CD4-positive, alpha-beta memory T cell (primary cell): ENCODE measurements at regions of chr19 and their contacts with region 1.

Region 1: GRCh38 chr19:47745010-47745901 is at the start of gene NOP53:
- DNase-seq: peak; percentile 97 to 98 (median 97)
- H3K4me3 ChIP-seq: peak within 1 kb of the TSS; percentile 7 to 91
- H3K4me3 Mint-ChIP-seq: peak within 1 kb of the TSS; percentile 97 to 100 (median 99)
- H3K27ac ChIP-seq: peak within 1 kb of the TSS; percentile 98
- H3K27ac Mint-ChIP-seq: peak within 1 kb of the TSS; percentile 98 to 100 (median 100)
- H3K4me1 ChIP-seq: peaks cover 54% of the 10 kb centered on the region
- H3K4me1 Mint-ChIP-seq: peaks cover 18 to 49% (median 30%) of the 10 kb centered on the region in 4 donors
- H3K27me3 ChIP-seq: no peaks in the 10 kb centered on the region
- H3K27me3 Mint-ChIP-seq: peaks cover 0 to 3% of the 10 kb centered on the region in 2 donors
- total RNA-seq, gene NOP53: 863 to 875 TPM

Region 2: GRCh38 chr19:47436712-47437401 is 308.4 kb before region 1 on chr19:
- CTCF ChIA-PET with region 1: interaction called, 11 read pairs
- POLR2A ChIA-PET with region 1: no interaction called
- intact Hi-C with region 1: loop called (anchors 1 kb)
- DNase-seq: peak; percentile 71 to 82 (median 78)
- H3K4me3 ChIP-seq: no peak overlapping the region
- H3K4me3 Mint-ChIP-seq: peak overlapping the region in 4 of 8 donors; percentile 14 to 46 (median 34)
- H3K27ac ChIP-seq: no peak overlapping the region
- H3K27ac Mint-ChIP-seq: peak overlapping the region in 5 of 7 donors; percentile 19 to 80 (median 46)
- H3K4me1 ChIP-seq: peaks cover 13% of the 10 kb centered on the region
- H3K4me1 Mint-ChIP-seq: peaks cover 7 to 21% (median 17%) of the 10 kb centered on the region in 4 donors
- H3K27me3 ChIP-seq: peaks cover 6% of the 10 kb centered on the region
- H3K27me3 Mint-ChIP-seq: peaks cover 24 to 37% of the 10 kb centered on the region in 2 donors

Region 3: GRCh38 chr19:47514869-47515588 is 230.2 kb before region 1 on chr19 and contains the start of gene NAPA:
- CTCF ChIA-PET with region 1: interaction called, 3 read pairs
- POLR2A ChIA-PET with region 1: interaction called, 4 read pairs
- intact Hi-C with region 1: loop called (anchors 1 kb)
- DNase-seq: peak; percentile 100
- H3K4me3 ChIP-seq: peak within 1 kb of the TSS; percentile 95 to 98
- H3K4me3 Mint-ChIP-seq: peak within 1 kb of the TSS; percentile 97 to 99 (median 98)
- H3K27ac ChIP-seq: peak within 1 kb of the TSS; percentile 97
- H3K27ac Mint-ChIP-seq: peak within 1 kb of the TSS; percentile 97 to 99 (median 98)
- H3K4me1 ChIP-seq: peaks cover 64% of the 10 kb centered on the region
- H3K4me1 Mint-ChIP-seq: peaks cover 50 to 87% (median 66%) of the 10 kb centered on the region in 4 donors
- H3K27me3 ChIP-seq: no peaks in the 10 kb centered on the region
- H3K27me3 Mint-ChIP-seq: no peaks in the 10 kb centered on the region
- total RNA-seq, gene NAPA: 84.1 to 88.1 TPM

Region 4: GRCh38 chr19:47618771-47619170 is 126.5 kb before region 1 on chr19:
- CTCF ChIA-PET with region 1: no interaction called
- POLR2A ChIA-PET with region 1: no interaction called
- intact Hi-C with region 1: no loop called
- DNase-seq: no peak
- H3K4me3 ChIP-seq: no peak overlapping the region
- H3K4me3 Mint-ChIP-seq: no peak overlapping the region
- H3K27ac ChIP-seq: no peak overlapping the region
- H3K27ac Mint-ChIP-seq: no peak overlapping the region
- H3K4me1 ChIP-seq: peaks cover 32% of the 10 kb centered on the region
- H3K4me1 Mint-ChIP-seq: peaks cover 19 to 61% (median 35%) of the 10 kb centered on the region in 4 donors
- H3K27me3 ChIP-seq: no peaks in the 10 kb centered on the region
- H3K27me3 Mint-ChIP-seq: no peaks in the 10 kb centered on the region

Region 5: GRCh38 chr19:47634007-47634406 is 111.2 kb before region 1 on chr19:
- CTCF ChIA-PET with region 1: no interaction called
- POLR2A ChIA-PET with region 1: no interaction called
- intact Hi-C with region 1: no loop called
- DNase-seq: no peak
- H3K4me3 ChIP-seq: no peak overlapping the region
- H3K4me3 Mint-ChIP-seq: no peak overlapping the region
- H3K27ac ChIP-seq: no peak overlapping the region
- H3K27ac Mint-ChIP-seq: peak overlapping the region in 1 of 7 donors; percentile 70
- H3K4me1 ChIP-seq: no peaks in the 10 kb centered on the region
- H3K4me1 Mint-ChIP-seq: peaks cover 21 to 65% (median 25%) of the 10 kb centered on the region in 4 donors
- H3K27me3 ChIP-seq: no peaks in the 10 kb centered on the region
- H3K27me3 Mint-ChIP-seq: no peaks in the 10 kb centered on the region

Region 6: DNA sequence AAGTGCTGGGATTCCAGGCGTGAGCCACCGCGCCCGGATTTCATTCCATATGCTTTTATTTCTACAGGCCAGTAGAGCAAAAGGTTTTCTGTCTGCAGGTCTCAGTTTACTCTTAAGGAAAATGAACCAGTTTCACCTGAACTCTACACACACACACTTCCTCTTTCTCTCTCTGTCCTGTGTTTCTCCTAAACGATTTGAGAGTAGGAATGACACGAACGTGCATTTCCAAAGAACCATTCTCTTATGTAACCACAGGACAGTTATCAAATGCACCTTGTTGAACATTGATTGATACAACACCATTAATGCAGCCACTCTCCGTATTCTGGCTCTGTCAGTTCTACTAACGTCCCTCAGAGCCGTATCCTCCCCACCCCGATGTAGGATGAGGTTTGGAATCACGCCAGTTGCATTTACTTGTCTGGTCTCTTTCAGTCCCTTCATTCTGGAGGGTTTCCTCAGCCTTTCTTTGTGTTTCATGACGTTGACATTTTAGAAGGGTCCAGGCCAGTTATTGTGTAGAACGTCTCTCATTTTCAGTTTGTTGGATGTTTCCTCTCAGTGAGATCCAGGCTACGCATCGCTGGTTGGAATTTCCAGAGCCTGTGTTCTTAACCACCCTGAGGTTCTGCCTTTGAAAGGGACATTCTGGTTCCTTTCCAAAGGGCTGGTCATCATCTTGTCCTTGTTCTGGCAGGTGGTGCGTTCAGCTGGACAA is 100.3 kb before region 1 on chr19:
- CTCF ChIA-PET with region 1: no interaction called
- POLR2A ChIA-PET with region 1: no interaction called
- intact Hi-C with region 1: no loop called
- DNase-seq: no peak
- H3K4me3 ChIP-seq: no peak overlapping the region
- H3K4me3 Mint-ChIP-seq: no peak overlapping the region
- H3K27ac ChIP-seq: no peak overlapping the region
- H3K27ac Mint-ChIP-seq: peak overlapping the region in 1 of 7 donors; percentile 76
- H3K4me1 ChIP-seq: no peaks in the 10 kb centered on the region
- H3K4me1 Mint-ChIP-seq: peaks cover 27 to 54% (median 32%) of the 10 kb centered on the region in 4 donors
- H3K27me3 ChIP-seq: no peaks in the 10 kb centered on the region
- H3K27me3 Mint-ChIP-seq: no peaks in the 10 kb centered on the region

Region 7: DNA sequence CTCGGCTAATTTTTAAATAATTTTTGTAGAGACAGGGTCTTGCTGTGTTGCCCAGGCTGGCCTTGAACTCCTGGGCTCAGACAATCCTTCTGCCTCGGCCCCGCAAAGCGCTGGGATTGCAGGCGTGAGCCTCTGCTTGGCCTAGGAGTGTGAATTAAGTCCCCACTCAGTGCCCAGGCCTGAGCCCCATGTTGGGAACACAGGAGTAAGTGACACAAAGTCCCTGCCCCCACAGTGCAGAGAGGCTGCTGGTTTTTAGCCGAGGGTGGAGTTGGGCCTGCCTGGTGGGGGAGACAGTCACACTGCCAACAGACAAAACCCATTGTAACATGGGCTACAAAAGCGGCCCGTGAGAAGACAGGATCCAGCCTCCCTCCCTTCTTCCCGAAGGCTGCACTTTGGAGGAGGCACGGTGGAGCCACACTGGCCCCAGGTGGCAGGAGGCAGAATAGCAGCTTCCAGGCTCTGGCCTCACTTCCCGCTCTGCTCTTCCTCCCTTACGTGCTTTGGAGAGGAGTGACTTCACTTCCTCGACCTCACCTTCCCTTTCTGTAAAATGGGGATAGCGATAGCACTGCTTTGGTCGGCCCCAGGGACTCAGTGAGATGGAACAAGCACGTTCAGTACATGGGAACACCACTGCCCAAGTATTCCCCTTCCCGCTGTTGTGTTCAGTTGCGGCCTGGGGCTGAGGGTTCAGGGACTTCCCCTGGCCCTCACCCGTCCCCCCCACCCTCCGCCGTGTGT is 47.2 kb before region 1 on chr19:
- CTCF ChIA-PET with region 1: no interaction called
- POLR2A ChIA-PET with region 1: no interaction called
- intact Hi-C with region 1: loop called (anchors 1 kb)
- DNase-seq: peak; percentile 46 to 54 (median 51)
- H3K4me3 ChIP-seq: no peak overlapping the region
- H3K4me3 Mint-ChIP-seq: no peak overlapping the region
- H3K27ac ChIP-seq: no peak overlapping the region
- H3K27ac Mint-ChIP-seq: no peak overlapping the region
- H3K4me1 ChIP-seq: no peaks in the 10 kb centered on the region
- H3K4me1 Mint-ChIP-seq: peaks cover 0 to 4% (median 2%) of the 10 kb centered on the region in 4 donors
- H3K27me3 ChIP-seq: no peaks in the 10 kb centered on the region
- H3K27me3 Mint-ChIP-seq: no peaks in the 10 kb centered on the region

Region 8: DNA sequence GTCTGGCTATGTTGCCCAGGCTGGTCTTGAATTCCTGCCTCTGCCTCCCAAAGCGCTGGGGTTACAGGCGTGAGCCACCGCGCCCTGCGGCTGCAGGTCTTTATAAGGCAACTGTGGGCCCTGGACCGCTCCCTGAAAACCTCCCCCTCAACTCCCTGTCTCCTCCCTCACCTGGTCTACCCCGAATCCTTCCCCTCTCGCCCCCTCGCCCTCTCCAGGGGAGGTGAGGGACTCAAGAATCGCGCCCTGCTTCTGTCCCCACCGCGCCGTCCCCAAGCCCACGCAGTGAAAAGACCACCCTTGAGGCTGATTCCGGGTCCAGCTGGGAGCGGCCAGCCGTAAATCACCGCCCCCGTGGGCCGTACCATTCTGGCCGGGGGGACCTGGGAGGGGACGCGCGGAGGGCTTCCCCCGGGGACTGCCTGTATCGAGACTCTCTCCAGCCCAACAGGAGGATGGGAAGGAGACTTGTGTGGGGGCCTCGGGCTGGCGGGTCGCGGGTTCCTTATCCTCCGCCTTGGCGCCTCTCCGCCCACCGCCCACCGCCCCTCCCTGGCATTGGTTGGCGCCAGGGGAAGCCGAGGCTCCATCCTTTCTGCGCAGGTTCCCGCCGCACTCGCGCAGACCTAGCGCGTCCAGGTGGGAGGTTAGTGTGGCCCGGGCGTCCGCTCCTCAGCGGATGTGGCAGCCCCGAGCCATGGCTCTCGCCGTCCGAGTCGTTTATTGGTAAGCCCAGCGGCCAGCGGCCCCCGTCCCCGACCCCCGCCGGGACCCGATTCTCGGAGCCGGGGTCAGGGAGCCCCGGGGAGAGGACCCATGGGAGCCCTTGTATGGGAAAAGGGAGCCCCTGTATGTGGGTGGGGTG is 33.1 kb after region 1 on chr19 and contains the start of gene SELENOW:
- CTCF ChIA-PET with region 1: no interaction called
- POLR2A ChIA-PET with region 1: interaction called, 6 read pairs
- intact Hi-C with region 1: loop called (anchors 1 kb)
- DNase-seq: peak; percentile 73 to 87 (median 80)
- H3K4me3 ChIP-seq: peak within 1 kb of the TSS; percentile 55 to 99
- H3K4me3 Mint-ChIP-seq: peak within 1 kb of the TSS; percentile 91 to 98 (median 96)
- H3K27ac ChIP-seq: peak within 1 kb of the TSS; percentile 86
- H3K27ac Mint-ChIP-seq: peak within 1 kb of the TSS; percentile 74 to 97 (median 95)
- H3K4me1 ChIP-seq: peaks cover 17% of the 10 kb centered on the region
- H3K4me1 Mint-ChIP-seq: peaks cover 15 to 42% (median 27%) of the 10 kb centered on the region in 4 donors
- H3K27me3 ChIP-seq: no peaks in the 10 kb centered on the region
- H3K27me3 Mint-ChIP-seq: no peaks in the 10 kb centered on the region
- total RNA-seq, gene SELENOW: 116 to 122 TPM